Activated CD4-positive, alpha-beta memory T cell treated with anti-CD3 and anti-CD28 coated beads for 36 hours (primary cell): ENCODE measurements at regions of chr6 and their contacts with region 1.

Region 1: DNA sequence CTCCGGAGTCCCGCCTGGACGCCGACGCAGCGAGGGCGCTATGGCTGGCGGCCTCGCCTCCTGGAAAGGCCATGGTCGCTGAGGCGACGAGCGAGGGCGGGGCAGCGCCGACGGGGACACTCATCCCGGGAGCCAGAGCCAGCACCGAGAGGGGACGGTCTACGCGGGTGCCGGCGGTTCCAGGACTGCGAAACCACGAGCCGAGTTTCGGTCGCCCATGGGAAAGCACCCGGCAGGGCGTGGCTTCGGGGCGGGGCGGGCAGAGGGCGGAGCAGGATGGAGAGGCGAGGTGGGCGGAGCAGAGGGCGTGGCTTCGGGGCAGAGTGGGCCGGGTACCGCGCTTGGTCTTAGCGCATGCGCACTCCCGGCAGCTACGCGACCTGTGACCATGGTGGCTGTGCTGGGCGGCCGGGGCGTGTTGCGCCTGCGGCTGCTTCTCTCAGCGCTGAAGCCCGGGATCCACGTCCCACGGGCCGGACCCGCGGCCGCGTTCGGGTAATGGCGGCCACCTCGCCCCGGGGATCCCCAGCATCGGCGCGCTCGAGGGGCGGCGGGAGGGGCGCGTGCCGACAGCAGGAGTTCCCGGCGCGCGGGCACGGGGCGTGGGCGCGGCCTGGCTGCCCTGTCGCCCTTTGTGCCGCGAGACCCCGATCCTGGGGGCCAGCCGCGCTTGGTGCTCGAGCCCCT is at the start of gene BPHL:
- DNase-seq: peak; percentile 99
- H3K4me3 Mint-ChIP-seq: peak within 1 kb of the TSS; percentile 78
- H3K27ac Mint-ChIP-seq: peak within 1 kb of the TSS; percentile 62
- H3K4me1 Mint-ChIP-seq: peaks cover 14% of the 10 kb centered on the region
- H3K27me3 Mint-ChIP-seq: no peaks in the 10 kb centered on the region
- total RNA-seq, gene BPHL: 10.1 to 11.4 TPM

Region 2: DNA sequence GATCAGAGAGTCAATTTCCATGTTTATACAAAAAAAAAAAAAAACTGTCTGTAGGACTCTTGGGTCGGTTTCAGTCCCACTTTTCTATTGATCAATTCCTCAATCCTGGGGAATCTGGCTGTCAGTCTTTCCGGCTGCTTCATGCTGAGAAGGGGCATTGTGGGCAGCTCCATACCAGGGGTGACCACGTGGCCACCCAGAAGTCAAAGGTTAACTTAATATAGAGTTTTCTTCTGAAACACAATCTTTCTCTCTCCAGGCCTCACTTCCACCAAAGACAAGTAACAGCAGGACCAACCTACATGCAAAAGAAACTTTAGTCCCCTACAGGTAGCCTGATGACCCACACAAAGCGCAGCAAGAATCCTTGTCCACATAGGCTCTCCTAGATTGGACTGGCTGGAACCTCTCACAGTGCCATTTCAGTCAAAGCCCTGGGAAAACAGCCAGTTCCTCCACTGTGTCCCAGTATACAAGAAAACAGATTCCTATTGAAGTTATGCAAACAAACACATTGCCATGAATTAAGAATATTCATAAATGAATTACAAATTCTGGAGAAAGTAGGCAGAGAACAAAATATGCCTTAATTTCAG is 196.9 kb before region 1 on chr6:
- CTCF ChIA-PET with region 1: no interaction called
- POLR2A ChIA-PET with region 1: no interaction called
- intact Hi-C with region 1: no loop called
- DNase-seq: no peak
- H3K4me3 Mint-ChIP-seq: no peak overlapping the region
- H3K27ac Mint-ChIP-seq: no peak overlapping the region
- H3K4me1 Mint-ChIP-seq: peaks cover 18% of the 10 kb centered on the region
- H3K27me3 Mint-ChIP-seq: no peaks in the 10 kb centered on the region

Region 3: GRCh38 chr6:2999618-3000557 is 118.6 kb before region 1 on chr6 and contains the start of gene NQO2:
- CTCF ChIA-PET with region 1: interaction called, 3 read pairs
- POLR2A ChIA-PET with region 1: no interaction called
- intact Hi-C with region 1: loop called (anchors 2 kb)
- DNase-seq: peak; percentile 94
- H3K4me3 Mint-ChIP-seq: peak within 1 kb of the TSS; percentile 88
- H3K27ac Mint-ChIP-seq: peak within 1 kb of the TSS; percentile 88
- H3K4me1 Mint-ChIP-seq: peaks cover 30% of the 10 kb centered on the region
- H3K27me3 Mint-ChIP-seq: no peaks in the 10 kb centered on the region
- total RNA-seq, gene NQO2: 36.1 to 38.9 TPM

Region 4: DNA sequence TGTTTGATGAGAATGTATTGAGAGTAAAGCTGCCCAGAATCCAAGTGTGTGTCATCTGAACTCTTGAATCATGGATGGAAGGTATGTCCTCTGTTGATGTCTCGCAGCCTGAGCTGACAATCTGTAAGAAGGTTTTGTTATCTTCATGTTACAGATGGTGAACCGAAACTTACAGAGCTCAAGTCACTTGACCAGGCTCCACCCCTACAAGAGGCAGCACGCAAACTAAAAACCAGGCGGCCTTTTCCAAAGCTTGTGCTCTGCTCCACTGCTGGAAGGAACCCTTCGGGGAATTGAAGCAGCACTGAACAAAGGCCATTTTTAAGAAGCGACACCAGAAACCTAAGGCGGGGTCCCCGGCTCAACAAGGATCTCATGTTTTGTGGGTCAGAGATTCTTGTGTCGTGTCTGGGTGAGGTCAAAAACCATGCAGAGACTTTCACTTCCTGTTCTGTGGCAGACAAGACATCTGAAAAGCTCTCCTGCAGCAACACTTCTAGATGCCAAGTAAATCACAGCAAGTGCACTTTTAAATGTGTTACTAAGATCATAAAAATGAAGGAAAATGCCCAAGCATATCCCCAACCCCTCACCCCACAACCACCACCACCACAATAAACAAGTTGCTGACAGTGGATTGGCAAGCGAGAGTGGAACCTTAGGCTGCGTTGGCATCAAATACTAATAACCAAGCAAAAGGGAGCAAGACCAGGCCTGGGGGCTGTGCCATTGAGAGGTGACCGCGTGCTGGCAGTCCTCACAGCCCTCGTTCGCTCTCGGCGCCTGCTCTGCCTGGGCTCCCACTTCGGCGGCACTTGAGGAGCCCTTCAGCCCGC is 91.5 kb before region 1 on chr6:
- CTCF ChIA-PET with region 1: no interaction called
- POLR2A ChIA-PET with region 1: no interaction called
- intact Hi-C with region 1: no loop called
- DNase-seq: peak; percentile 50
- H3K4me3 Mint-ChIP-seq: peak overlapping the region; percentile 23
- H3K27ac Mint-ChIP-seq: peak overlapping the region; percentile 87
- H3K4me1 Mint-ChIP-seq: peaks cover 52% of the 10 kb centered on the region
- H3K27me3 Mint-ChIP-seq: no peaks in the 10 kb centered on the region

Region 5: GRCh38 chr6:3102875-3103274 is 15.6 kb before region 1 on chr6:
- CTCF ChIA-PET with region 1: interaction called, 3 read pairs
- POLR2A ChIA-PET with region 1: no interaction called
- intact Hi-C with region 1: loop called (anchors 1 kb)
- DNase-seq: no peak
- H3K4me3 Mint-ChIP-seq: no peak overlapping the region
- H3K27ac Mint-ChIP-seq: no peak overlapping the region
- H3K4me1 Mint-ChIP-seq: peaks cover 6% of the 10 kb centered on the region
- H3K27me3 Mint-ChIP-seq: no peaks in the 10 kb centered on the region

Region 6: DNA sequence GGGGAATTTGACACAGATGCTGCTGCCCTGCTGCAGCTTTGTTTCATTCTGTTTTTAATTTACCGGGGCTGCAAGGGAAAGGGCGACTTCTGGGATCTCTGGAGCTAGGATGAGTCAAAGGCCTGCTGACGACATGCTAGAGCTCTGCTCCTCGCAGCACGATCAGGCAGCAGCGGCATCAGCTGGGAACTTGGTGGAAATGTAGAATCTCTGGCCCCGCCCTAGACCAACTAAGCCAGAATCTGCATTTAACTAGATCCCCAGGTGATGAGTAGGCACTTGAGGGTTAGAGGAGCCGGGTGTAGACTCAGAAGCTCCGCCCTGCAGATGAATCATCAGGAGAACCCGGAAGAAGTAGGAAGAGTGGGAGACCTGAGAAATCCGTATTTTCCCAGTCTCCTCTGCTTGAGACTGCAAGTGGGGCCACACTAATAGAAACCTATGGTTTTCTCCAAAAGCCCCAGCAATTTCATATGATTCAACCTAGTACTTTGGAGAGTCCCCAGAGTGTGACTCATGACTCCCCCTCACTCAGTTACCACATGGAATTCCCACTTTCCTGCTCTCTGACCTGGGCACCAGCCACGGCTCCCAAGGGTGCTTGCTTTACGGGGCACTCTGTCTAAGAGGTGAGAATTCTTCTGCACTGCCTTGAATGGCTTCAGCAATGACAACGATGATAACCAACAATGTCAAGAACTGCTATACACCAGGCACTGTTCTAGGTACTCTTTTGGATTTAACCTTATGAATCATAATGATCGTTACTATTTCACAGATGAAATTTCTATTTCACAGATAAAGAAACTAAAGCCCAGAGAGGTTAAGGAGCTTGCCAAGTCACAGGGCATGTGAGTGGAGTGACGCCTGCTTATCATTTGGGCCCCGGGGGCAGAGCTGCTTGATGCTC is 90.9 kb after region 1 on chr6:
- CTCF ChIA-PET with region 1: no interaction called
- POLR2A ChIA-PET with region 1: no interaction called
- intact Hi-C with region 1: loop called (anchors 1 kb)
- DNase-seq: peak; percentile 84
- H3K4me3 Mint-ChIP-seq: peak overlapping the region; percentile 51
- H3K27ac Mint-ChIP-seq: peak overlapping the region; percentile 89
- H3K4me1 Mint-ChIP-seq: peaks cover 30% of the 10 kb centered on the region
- H3K27me3 Mint-ChIP-seq: peaks cover 20% of the 10 kb centered on the region

Region 7: DNA sequence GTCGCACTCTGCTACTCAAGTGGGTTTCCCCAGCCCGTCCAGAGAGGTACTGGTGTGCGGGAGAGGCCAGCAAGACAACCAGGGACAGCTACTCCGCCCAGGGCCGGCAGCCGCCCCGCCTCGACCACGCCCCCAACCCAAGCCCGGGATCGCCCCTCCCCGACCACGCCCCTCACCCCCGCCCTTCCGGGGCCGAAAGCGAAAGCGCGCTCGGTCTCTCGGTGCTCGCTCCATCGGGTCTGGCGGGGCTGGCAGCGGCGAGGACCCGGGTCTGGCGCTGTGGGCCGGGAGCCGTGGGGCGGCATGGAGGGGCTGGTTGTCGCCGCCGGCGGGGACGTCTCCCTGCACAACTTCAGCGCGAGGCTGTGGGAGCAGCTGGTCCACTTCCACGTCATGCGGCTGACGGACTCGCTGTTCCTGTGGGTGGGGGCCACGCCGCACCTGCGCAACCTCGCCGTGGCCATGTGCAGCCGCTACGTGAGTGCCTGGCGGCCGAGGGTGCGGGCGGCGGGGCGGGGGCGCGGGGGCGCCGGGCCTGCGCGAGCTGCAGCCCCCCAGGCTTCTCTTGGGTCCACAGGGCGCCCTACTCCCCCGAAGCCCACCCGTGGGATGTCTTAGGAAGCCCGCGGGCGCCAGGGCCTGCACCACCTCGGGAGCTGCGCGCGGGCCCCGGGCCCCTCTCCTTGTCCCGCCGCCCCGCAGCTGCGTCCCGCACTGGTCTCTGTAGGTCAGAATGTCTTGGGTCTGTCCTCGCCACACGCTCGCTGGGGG is 140.4 kb after region 1 on chr6 and contains the start of gene PSMG4:
- CTCF ChIA-PET with region 1: interaction called, 122 read pairs
- POLR2A ChIA-PET with region 1: interaction called, 3 read pairs
- intact Hi-C with region 1: loop called (anchors 2 kb)
- DNase-seq: peak; percentile 96
- H3K4me3 Mint-ChIP-seq: peak within 1 kb of the TSS; percentile 92
- H3K27ac Mint-ChIP-seq: peak within 1 kb of the TSS; percentile 84
- H3K4me1 Mint-ChIP-seq: peaks cover 32% of the 10 kb centered on the region
- H3K27me3 Mint-ChIP-seq: no peaks in the 10 kb centered on the region
- total RNA-seq, gene PSMG4: 24.2 to 25.2 TPM